Body of pancreas (tissue), 4 donors: ENCODE measurements at regions of chr3 and their contacts with region 1.

Region 1: DNA sequence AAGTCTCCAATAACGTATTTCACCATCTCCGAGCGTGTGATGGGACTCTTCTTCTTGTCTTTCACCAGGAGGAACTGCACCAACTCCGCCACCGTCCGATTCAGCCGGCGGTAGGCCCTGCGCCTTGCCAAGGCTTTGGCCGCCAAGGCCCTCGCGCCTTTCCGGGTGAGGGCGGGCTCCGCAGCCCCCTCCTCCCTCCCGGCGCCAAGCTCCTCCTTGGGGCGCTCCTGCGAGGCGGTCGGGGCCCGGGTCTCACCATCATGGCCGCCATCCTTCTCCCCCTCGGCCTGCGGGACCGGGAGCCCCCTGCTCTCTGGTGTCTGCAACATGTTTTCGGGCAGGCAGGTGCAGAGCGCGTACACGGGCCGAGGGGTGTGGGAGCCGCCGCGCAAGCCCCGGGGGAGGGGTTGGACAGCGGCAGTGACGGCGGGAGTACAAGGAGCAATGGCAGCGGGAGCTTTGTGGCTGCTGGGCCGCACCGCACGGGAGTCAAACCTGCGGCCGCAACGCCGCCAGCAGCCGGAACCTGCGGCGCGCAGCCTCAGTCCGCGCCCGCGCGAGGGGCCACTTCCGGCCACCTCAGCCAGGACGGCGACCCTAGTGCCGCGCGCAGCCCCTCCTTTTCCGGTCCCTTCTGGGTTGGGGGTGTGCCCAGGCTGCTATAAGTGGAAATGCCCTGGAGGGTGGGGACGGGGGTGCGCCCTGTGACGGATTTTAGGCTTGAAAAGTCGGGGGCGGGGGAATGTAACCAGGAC is at the start of gene MAGEF1:
- DNase-seq: peak; percentile 83 to 90 (median 88)
- ATAC-seq: peak; percentile 92
- H3K4me3 ChIP-seq: peak within 1 kb of the TSS; percentile 39 to 44
- H3K27ac ChIP-seq: peak within 1 kb of the TSS; percentile 82 to 98 (median 91)
- H3K4me1 ChIP-seq: peaks cover 18% of the 10 kb centered on the region
- H3K27me3 ChIP-seq: no peaks in the 10 kb centered on the region
- CTCF ChIP-seq: peak in 3 of 7 experiments; percentile 8 to 29 (median 21)
- POLR2A ChIP-seq: peak; percentile 84 to 91 (median 90)
- total RNA-seq, gene MAGEF1: 21.8 to 31.1 TPM

Region 2: DNA sequence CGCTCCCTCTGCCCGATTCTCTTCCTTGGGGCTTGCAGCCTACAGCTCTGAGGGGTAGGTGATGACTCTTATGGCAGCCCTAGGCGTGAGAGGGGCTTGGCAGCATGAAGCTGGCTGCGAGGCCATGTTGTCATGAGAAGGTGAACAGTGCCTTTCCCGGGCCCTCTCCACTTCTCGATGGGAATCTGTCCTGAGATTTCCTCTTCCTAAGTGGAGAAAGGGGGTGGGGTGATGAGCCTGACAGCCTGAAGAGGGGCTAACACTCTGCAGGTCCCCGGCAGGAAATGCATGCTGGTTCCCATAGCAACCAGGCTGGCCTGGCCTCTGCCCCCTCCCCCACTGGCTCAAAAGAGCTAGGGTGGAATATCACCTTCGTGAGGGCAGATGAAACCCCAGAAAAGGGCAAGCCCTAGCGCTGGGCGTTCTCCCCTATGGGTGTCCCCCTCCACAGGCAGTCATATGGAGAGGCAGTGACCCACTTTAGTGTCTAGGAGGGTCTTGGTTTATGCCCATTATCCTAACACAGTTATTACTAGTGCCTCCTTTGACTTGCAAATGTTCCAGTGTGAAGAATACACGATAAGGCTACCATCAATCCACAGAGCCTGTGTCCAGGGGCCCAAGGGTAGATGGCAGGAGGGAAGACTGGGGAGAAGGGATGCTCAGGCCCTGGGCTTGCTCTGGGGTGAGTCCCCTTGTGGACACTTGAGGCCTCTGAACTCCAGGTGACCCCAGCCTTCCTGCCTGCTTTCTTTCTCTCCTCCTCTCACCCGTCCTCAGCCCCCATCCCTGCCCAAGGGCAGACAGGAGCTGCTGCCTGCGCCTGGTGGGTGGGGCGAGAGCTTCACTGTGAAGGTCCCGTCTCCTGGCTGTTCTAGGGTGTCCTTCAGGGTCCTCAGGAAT is 136.9 kb before region 1 on chr3:
- intact Hi-C with region 1: loop called (anchors 10 kb)
- DNase-seq: no peak
- ATAC-seq: no peak
- H3K4me3 ChIP-seq: no peak overlapping the region
- H3K27ac ChIP-seq: no peak overlapping the region
- H3K4me1 ChIP-seq: peaks cover 3% of the 10 kb centered on the region
- H3K27me3 ChIP-seq: no peaks in the 10 kb centered on the region
- CTCF ChIP-seq: no peak
- POLR2A ChIP-seq: no peak

Region 3: DNA sequence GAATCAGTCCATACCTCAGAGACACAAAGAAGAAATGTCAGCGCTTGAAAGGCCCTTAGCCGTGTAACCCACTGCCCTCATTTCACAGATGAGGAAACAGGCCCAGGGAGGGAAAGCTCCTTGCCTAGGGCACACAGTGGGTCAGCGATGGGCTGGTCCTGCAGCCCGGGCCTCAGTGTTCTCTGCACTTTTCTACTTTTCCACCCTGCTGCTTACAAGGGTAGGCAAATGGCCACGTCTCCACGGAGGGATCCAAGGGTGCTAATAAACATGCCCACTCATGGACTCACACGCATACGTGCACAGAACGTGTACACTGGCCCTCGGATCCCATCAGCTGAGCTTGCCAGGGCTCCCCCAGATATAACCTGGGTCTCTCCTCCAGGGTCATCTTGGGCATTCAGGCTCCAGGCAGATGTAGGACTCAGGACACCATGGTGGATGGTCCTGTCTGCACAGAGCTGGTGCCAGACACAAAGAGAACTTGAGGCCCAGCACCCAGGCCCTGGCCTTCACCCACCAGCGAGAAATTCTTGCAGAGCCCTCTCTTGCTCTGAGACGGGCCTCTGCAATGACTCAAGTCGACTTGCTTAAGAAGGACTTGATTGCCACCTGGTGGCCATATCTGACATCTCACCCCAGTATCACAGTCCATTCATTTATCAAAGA is 65.8 kb after region 1 on chr3:
- intact Hi-C with region 1: loop called (anchors 10 kb)
- DNase-seq: peak; percentile 95 to 98 (median 96)
- ATAC-seq: peak; percentile 93
- H3K4me3 ChIP-seq: no peak overlapping the region
- H3K27ac ChIP-seq: no peak overlapping the region
- H3K4me1 ChIP-seq: peaks cover 4% of the 10 kb centered on the region
- H3K27me3 ChIP-seq: no peaks in the 10 kb centered on the region
- CTCF ChIP-seq: peak; percentile 65 to 97 (median 93)
- POLR2A ChIP-seq: no peak